Caco-2 (cell line): ENCODE measurements at regions of chr15 and their contacts with region 1.

Region 1: GRCh38 chr15:33737687-33738601 is 230.4 kb upstream of the CHRM5 start:
- DNase-seq: peak in 1 of 2 experiments; percentile 56
- H3K4me3 ChIP-seq: no peak overlapping the region
- H3K4me3 Mint-ChIP-seq: no peak overlapping the region
- H3K27ac Mint-ChIP-seq: no peak overlapping the region
- H3K4me1 ChIP-seq: no peaks in the 10 kb centered on the region
- H3K4me1 Mint-ChIP-seq: no peaks in the 10 kb centered on the region
- H3K27me3 ChIP-seq: no peaks in the 10 kb centered on the region
- H3K27me3 Mint-ChIP-seq: peaks cover 7% of the 10 kb centered on the region
- CTCF ChIP-seq: peak; percentile 68 to 82

Region 2: GRCh38 chr15:33963831-33964664 is 226.1 kb after region 1 on chr15:
- CTCF ChIA-PET with region 1: interaction called, 7 read pairs
- POLR2A ChIA-PET with region 1: no interaction called
- intact Hi-C with region 1: loop called (anchors 1 kb)
- DNase-seq: peak in 1 of 2 experiments; percentile 24
- H3K4me3 ChIP-seq: no peak overlapping the region
- H3K4me3 Mint-ChIP-seq: no peak overlapping the region
- H3K27ac Mint-ChIP-seq: no peak overlapping the region
- H3K4me1 ChIP-seq: no peaks in the 10 kb centered on the region
- H3K4me1 Mint-ChIP-seq: no peaks in the 10 kb centered on the region
- H3K27me3 ChIP-seq: no peaks in the 10 kb centered on the region; the same call in 1 of the 2 replicates
- H3K27me3 Mint-ChIP-seq: no peaks in the 10 kb centered on the region
- CTCF ChIP-seq: peak; percentile 42 to 63

Region 3: GRCh38 chr15:33994005-33994615 is 256.2 kb after region 1 on chr15:
- CTCF ChIA-PET with region 1: no interaction called
- POLR2A ChIA-PET with region 1: no interaction called
- intact Hi-C with region 1: loop called (anchors 10 kb)
- DNase-seq: peak; percentile 38
- H3K4me3 ChIP-seq: no peak overlapping the region
- H3K4me3 Mint-ChIP-seq: no peak overlapping the region
- H3K27ac Mint-ChIP-seq: no peak overlapping the region
- H3K4me1 ChIP-seq: no peaks in the 10 kb centered on the region
- H3K4me1 Mint-ChIP-seq: no peaks in the 10 kb centered on the region
- H3K27me3 ChIP-seq: no peaks in the 10 kb centered on the region
- H3K27me3 Mint-ChIP-seq: no peaks in the 10 kb centered on the region
- CTCF ChIP-seq: peak; percentile 8 to 30